HCT116 (cell line): ENCODE measurements at regions of chr1 and their contacts with region 1.

Region 1: GRCh38 chr1:161440312-161440894 is 64.9 kb upstream of the FCGR2A start:
- DNase-seq: no peak
- ATAC-seq: peak; percentile 56
- H3K4me3 ChIP-seq: peak overlapping the region; percentile 51 to 64
- H3K27ac ChIP-seq: peak overlapping the region; percentile 88
- H3K4me1 ChIP-seq: peaks cover 4 to 11% of the 10 kb centered on the region in 2 experiments; a peak in 3 of 4 replicates
- H3K27me3 ChIP-seq: no peaks in the 10 kb centered on the region
- CTCF ChIP-seq: peak; percentile 33 to 72 (median 56); a peak in 5 of 6 replicates
- POLR2A ChIP-seq: no peak
- RAD21 ChIP-seq: peak; percentile 33; the same call in 1 of the 2 replicates

Region 2: DNA sequence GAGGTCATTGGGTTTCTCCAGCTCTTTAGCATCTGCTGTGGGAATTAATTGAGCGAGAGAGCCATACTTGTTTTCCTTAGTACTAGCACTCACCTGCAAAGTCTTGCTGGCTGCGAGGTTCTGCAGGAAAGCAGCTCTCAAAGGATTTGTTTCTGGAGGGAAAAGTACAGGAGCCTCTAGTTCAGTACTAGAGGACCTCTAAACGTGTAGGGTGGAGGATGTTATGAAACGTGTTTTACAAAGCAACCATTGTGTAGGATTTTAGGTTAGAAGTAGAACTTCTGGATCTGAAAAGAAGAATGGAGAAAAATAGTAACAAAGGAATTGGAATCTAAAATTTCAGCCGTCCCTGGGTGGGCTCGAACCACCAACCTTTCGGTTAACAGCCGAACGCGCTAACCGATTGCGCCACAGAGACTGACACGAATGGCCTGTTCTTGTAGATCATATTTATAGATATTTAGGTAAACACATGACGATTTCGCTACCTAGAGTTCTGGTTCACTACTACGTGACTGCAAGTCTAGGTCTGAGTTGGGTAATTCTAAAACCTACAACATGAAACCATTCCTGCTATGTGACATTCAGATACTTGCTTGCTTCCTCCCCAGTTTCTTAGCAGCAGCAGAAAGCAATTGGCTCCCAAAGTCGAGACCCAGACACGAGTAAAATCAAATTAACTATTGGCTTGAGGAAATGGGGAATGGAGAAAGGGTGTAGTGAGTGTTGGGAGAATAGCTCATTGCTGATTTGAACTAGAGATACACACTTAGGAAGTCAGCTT is 12.5 kb before region 1 on chr1:
- CTCF ChIA-PET with region 1: interaction called, 20 read pairs
- POLR2A ChIA-PET with region 1: interaction called, 4 read pairs
- RAD21 ChIA-PET with region 1: no interaction called
- intact Hi-C with region 1: no loop called
- DNase-seq: peak; percentile 63
- ATAC-seq: peak; percentile 78
- H3K4me3 ChIP-seq: peak overlapping the region; percentile 26 to 48; a peak in 3 of 4 replicates
- H3K27ac ChIP-seq: peak overlapping the region; percentile 41; the same call in 1 of the 2 replicates
- H3K4me1 ChIP-seq: peaks cover 6 to 20% of the 10 kb centered on the region in 2 experiments
- H3K27me3 ChIP-seq: no peaks in the 10 kb centered on the region; the same call in 1 of the 2 replicates
- CTCF ChIP-seq: no peak
- POLR2A ChIP-seq: no peak
- RAD21 ChIP-seq: no peak

Region 3: GRCh38 chr1:161531986-161532643 is 91.7 kb after region 1 on chr1:
- CTCF ChIA-PET with region 1: no interaction called
- POLR2A ChIA-PET with region 1: no interaction called
- RAD21 ChIA-PET with region 1: no interaction called
- intact Hi-C with region 1: no loop called
- DNase-seq: no peak
- ATAC-seq: no peak
- H3K4me3 ChIP-seq: no peak overlapping the region
- H3K27ac ChIP-seq: no peak overlapping the region
- H3K4me1 ChIP-seq: peaks cover 5 to 7% of the 10 kb centered on the region in 2 experiments; a peak in 3 of 4 replicates
- H3K27me3 ChIP-seq: no peaks in the 10 kb centered on the region
- CTCF ChIP-seq: no peak
- POLR2A ChIP-seq: no peak
- RAD21 ChIP-seq: no peak